HEK293T (cell line): ENCODE measurements at regions of chr15 and their contacts with region 1.

Region 1: DNA sequence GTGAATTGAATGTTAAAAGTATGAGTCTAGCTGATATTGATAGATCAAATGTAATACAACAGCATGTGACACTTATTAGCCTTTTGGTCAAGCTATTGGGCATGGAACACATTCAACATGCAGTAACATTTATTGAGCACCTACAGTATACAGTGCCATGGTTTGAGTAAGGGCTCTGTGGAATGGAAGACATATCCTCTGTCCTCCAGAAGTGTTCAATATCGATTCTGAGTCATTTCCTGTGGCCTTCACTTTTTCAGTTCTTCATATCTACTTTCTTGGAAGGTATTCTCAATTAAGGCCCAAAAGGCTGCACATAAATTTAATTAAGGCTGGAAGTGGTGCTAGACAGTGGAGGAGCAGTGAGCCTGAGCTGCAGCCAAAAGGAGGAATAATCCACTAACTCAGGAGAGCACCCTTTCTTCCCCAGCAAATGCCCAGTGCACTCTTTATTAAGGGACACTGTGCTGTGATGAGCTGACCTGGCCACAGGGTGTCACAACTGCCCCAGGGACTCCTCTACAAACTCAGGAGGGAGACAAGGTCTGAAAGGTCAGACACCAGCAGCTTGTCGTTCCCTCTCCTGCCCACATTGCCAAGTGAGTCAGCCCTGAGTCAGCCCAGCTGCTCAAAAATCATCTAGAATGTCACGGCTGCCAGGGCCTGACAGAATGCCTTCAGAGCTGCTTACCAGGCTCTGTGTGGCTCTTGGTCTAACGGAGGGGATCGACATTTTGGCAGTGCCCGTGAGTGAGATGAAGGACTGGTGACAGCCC is 544.8 kb downstream of the AGBL1 start:
- DNase-seq: peak; percentile 28

Region 2: GRCh38 chr15:86608461-86609205 is 15.8 kb before region 1 on chr15:
- CTCF ChIA-PET with region 1: interaction called, 12 read pairs
- POLR2A ChIA-PET with region 1: no interaction called
- DNase-seq: no peak

Region 3: GRCh38 chr15:86743283-86743903 is 118.9 kb after region 1 on chr15:
- CTCF ChIA-PET with region 1: interaction called, 22 read pairs
- POLR2A ChIA-PET with region 1: no interaction called
- DNase-seq: peak; percentile 54

Region 4: GRCh38 chr15:86813907-86814306 is 189.5 kb after region 1 on chr15:
- CTCF ChIA-PET with region 1: no interaction called
- POLR2A ChIA-PET with region 1: no interaction called
- DNase-seq: no peak

Region 5: DNA sequence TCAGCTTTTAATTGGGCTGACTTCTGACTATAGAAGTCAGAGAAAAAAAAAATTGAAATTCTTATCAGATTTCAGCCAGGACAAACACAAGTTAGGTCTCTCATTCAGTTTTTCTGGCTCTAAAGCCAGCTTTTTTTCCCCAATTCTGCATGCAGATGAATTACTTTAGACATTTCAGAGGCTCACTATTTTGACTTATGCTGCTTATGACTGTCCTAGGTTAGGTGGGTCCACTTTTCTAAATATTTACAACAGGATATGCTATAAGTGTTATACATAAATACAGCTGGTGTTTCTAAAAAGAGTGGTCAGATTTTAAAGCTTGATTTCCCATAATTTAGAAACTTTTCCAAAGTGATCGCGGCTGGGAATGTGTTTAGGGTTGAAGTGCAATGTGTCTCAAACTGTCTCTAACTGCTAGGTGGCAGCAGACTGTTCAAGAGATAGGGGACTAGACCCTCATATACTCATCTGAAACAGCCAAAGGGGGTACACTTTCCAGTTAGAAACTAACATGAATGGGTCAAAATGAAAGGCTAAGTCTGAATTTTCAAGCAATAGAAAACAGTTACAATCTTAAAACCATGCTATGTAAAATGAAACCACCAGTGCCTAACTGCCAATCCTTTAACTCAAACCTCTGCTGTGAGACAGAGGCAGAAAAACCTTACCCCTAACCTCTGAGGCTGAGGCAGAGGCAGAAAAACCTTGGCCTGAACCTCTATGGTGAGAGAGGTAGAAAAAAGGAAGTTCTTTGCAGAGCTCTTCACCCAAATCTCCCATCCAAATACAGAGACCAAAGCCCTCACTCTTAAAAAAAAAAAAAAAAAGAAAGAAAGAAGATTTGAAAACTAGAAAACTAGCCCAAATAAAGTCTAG is 1036.0 kb after region 1 on chr15:
- CTCF ChIA-PET with region 1: no interaction called
- POLR2A ChIA-PET with region 1: no interaction called
- DNase-seq: no peak